ENCODE measurements at regions of chr3 and their contacts with region 1.

Region 1: GRCh38 chr3:183178629-183179549 is 16.4 kb upstream of the LAMP3 start:
- DNase-seq: peak; percentile 69
- CTCF ChIP-seq: peak; percentile 54

Region 2: DNA sequence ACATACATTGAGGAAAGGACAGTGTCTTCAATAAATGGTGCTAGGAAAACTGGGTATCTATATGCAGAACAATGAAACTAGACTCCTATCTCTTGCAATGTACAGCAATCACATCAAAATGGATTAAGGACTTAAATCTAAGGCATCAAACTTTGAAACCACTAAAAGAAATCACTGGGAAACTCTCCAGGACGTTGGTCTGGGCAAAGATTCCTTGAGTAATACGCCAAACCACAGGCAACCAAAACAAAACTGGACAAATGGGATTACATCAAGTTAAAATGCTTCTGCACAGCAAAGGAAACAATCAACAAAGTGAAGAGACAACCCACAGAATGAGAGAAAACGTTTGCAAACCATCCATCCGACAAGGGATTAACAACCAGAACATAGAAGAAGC is 30.8 kb before region 1 on chr3:
- CTCF ChIA-PET with region 1: no interaction called
- POLR2A ChIA-PET with region 1: interaction called, 12 read pairs
- DNase-seq: no peak
- CTCF ChIP-seq: no peak

Measured in GM10248 (cell line).